Activated B cell treated with CpG ODN at 0.5 μM for 24 hours (primary cell): ENCODE measurements at regions of chr9 and their contacts with region 1.

Region 1: GRCh38 chr9:11713077-11713476 is 980.1 kb upstream of the TYRP1 start:
- DNase-seq: no peak
- ATAC-seq: no peak
- H3K4me3 Mint-ChIP-seq: no peak overlapping the region
- H3K27ac Mint-ChIP-seq: no peak overlapping the region
- H3K4me1 Mint-ChIP-seq: no peaks in the 10 kb centered on the region
- H3K27me3 Mint-ChIP-seq: no peaks in the 10 kb centered on the region
- CTCF ChIP-seq: no peak

Region 2: DNA sequence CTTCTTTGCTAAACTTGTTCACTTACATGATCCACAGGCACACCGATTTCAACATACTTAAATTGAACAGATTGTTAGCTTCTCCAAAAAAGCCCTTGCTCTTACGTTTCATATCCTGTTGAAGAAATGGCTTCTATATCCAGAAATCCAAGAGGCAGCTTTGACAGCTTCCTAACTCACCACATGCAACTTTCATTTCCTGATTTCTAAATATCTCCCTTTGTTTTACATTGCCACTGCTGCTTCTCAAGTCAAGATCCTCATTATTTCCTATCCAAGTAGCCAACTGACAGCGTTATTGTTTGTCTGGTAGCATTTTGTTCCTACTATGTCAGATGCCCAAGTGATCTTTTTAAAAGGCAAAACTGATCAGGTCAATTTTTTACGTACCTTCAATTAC is 66.9 kb after region 1 on chr9:
- CTCF ChIA-PET with region 1: no interaction called
- POLR2A ChIA-PET with region 1: no interaction called
- intact Hi-C with region 1: loop called (anchors 10 kb)
- DNase-seq: no peak
- ATAC-seq: no peak
- H3K4me3 Mint-ChIP-seq: no peak overlapping the region
- H3K27ac Mint-ChIP-seq: no peak overlapping the region
- H3K4me1 Mint-ChIP-seq: no peaks in the 10 kb centered on the region
- H3K27me3 Mint-ChIP-seq: no peaks in the 10 kb centered on the region
- CTCF ChIP-seq: no peak